Posterior cingulate gyrus (tissue), 11 donors: ENCODE measurements at regions of chr22 and their contacts with region 1.

Region 1: GRCh38 chr22:33920927-33921524 is 750 bp upstream of the LARGE1 start:
- DNase-seq: peak; percentile 98 to 100 (median 99)

Region 2: DNA sequence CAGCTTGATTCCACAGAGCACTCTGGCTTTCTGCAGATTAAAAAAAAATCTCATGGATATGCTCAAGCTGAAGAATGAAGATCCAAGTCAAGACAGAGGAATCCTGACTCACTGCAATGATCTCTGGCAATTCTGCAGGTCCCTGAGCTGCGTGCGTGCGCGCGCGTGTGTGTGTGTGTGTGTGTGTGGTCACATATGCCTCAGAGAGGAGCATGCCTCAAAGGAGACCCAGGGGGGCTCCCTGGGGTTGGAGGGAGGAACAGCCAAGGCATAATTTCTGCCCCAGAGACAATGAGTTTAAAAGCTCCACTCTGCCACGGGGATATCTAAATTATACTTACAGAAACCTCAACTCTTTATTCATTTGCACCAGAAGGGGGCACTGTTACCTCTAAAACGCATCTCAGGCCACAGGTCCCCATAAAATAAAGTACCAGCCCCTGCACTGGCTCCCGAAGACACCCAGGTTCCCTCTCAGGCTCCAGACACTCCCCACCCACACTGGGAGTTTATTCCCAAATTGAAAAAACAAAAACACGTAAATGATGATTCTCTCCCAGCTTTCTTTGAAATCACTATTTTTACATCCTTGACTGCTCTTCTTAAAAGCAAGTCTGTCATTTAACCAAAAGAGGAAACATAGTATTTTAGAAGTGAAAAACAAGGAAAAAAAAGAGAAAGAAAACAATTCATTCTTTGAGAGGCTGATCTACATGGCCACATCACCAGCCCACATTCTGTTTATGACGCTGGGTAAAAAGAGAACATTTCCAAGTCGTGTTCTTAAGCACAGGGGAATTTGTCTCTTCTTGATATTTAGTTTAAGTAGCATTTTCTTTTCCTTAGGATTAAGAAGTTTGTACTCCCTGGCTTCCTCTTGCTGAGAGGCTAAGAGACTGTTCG is 401.7 kb before region 1 on chr22:
- intact Hi-C with region 1: loop called (anchors 1 kb)
- DNase-seq: peak in 6 of 10 donors; percentile 16 to 81 (median 34)

Region 3: GRCh38 chr22:33986954-33987353 is 65.9 kb after region 1 on chr22:
- intact Hi-C with region 1: no loop called
- DNase-seq: no peak

Region 4: DNA sequence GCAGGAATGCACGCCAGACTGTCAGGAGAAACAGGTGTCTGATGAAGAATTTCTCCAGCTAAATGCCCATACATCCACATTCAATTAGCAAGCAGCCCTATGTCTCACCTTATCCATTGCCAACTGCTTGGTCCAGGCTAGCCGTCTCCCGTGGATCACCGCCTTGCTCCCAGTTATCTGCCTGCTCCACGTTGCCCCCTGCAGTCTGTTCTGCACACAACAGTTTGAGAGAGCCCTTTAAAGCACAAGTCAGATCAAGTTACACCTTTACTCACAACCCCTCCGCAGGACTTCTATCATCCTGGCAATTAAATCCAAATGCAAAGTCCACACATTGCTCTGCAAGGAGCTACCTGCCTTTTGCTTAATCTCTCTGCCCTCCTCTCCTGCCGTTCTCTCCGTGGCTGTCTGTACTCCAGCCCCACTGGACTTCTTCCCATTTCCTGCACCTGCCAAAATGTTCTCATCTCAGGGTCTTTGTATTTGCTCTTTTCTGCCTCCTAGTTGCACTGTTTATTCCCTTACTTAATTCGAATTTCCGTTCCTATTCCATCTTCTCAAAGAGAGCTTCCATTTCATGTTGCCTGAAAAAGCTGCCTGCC is 184.5 kb after region 1 on chr22:
- intact Hi-C with region 1: loop called (anchors 1 kb)
- DNase-seq: peak; percentile 40 to 95 (median 72)

Region 5: DNA sequence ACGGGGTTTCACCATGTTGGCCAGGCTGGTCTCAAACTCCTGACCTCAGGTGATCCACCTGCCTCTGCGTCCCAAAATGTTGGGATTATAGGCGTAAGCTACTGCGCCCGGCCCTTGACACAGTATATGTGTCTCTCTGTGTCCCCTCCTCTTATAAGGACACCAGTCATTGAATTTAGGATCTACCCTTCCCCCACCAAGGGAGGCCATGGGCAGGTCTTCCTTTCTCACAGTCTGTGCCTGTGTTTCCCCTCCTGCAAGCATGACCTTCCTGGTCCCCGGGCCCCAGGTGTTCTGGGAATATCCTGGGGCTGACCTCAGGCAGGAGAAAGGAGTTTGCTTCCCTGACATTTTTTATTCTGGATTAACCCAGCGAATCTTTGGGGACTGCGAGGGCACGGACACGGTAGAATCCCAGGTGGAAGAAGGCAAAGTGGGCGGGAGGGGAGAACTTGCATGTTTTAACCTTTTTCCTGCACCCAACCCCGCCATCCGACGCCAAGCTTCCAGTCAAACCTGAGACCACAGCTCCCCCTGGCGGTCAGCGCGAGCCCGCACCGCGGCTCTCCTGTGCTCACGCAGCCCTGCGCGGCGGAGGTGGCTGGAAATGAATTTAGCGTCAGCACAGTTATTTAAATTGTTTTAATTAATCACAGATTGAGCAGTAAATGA is 1102.8 kb after region 1 on chr22:
- intact Hi-C with region 1: loop called (anchors 2 kb)
- DNase-seq: peak; percentile 40 to 96 (median 82)